AG04449 (cell line): ENCODE measurements at regions of chr15 and their contacts with region 1.

Region 1: DNA sequence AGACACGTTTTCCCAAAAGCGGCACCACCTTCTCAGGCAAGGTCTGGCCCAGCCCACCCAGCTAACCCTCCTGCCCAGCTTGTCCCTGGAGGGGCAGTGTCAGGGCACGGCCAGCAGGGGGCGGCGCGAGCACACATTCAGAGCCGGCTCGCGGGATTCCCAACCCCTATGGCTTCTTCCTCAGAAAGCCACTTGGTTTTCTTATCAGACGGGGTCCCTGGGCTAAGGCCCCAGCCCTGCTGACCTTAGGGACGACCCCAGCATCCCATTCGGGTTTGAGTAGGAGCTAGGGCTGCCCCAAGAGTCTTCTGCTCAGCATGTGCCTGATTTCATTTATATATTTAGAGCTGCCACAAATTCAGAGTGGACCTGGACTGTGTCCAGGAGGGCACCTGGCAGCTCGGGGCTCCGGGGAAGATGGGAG is 14.5 kb downstream of the RLBP1 start:
- DNase-seq: no peak
- H3K4me3 ChIP-seq: peak overlapping the region; percentile 12; the same call in 1 of the 2 replicates
- CTCF ChIP-seq: peak; percentile 99

Region 2: DNA sequence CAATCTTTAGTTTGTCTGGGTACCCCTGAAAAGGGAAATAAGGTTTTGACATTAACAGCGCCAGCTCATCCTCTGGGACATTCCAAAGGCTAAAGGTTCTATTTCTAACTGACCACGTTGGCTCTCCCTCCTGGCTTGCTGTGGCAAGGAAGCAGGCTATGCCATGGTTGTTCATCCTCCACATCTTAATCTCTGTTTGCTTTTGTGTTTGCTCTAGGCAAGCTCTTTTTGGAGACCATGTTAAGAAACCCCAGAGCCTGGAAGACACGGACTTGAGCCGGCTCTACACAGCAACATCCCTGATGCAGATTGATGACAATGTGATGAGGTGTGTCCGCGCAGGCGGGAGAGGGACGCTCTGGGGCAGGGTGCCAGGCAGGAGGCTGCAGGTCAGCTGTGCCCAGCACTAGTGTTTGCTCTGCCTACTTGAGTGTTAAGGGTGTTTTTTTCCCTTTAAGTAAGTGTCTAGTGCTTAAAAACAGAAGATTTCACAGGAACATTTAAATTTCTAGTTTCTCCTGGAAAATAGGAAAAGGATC is 18.9 kb before region 1 on chr15:
- CTCF ChIA-PET with region 1: interaction called, 97 read pairs
- POLR2A ChIA-PET with region 1: no interaction called
- DNase-seq: no peak
- H3K4me3 ChIP-seq: no peak overlapping the region
- CTCF ChIP-seq: no peak

Region 3: GRCh38 chr15:89230277-89230676 is 23.4 kb after region 1 on chr15:
- CTCF ChIA-PET with region 1: interaction called, 32 read pairs
- POLR2A ChIA-PET with region 1: no interaction called
- DNase-seq: no peak
- H3K4me3 ChIP-seq: no peak overlapping the region
- CTCF ChIP-seq: peak; percentile 29

Region 4: DNA sequence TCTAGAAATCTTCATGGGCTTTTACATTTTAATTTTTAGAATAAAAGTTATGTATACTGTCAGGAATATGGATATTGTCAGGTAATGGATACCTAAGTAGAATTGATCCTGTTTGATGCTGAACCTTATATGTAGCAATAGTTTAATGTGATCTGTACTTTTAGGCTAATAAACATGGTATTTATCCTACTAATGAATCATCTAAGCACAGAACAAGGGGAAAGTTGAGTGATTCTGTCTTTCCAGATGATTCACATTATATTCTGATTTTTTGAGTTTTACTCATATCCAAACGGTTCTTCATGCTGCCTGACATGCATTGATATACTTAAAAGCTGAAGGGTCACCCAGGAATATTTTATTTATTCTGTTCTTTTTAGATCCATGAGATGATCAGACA is 71.4 kb after region 1 on chr15:
- CTCF ChIA-PET with region 1: interaction called, 21 read pairs
- POLR2A ChIA-PET with region 1: no interaction called
- DNase-seq: no peak
- H3K4me3 ChIP-seq: no peak overlapping the region
- CTCF ChIP-seq: no peak

Region 5: DNA sequence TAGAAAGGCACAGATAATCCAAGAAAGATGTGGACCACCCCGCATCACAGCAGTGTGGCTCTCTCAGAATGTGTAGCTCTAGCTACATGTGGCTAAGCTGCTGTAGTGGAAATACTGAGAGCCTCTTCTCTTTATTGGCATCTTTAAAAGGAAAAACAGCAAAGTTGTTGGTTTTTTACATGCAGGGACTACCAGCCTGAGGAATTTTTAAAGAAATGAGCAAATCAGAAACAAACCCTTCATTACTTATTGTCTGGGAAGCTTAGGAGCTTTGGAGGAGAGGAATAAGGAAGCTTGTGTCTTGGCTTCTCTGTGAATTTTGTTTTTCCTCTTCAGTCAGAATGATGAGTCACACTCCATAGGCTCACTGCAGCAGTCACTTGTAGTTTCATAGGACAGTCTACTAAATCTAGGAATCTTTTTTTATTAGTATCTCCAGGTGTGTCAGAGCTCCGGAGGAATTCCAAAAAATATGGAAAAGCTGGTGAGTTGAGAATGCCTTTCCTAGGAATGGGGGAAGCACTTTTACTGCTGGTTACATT is 100.2 kb after region 1 on chr15:
- CTCF ChIA-PET with region 1: interaction called, 123 read pairs
- POLR2A ChIA-PET with region 1: no interaction called
- DNase-seq: peak; percentile 9
- H3K4me3 ChIP-seq: no peak overlapping the region
- CTCF ChIP-seq: no peak

Region 6: GRCh38 chr15:89364741-89365450 is 158.0 kb after region 1 on chr15:
- CTCF ChIA-PET with region 1: no interaction called
- POLR2A ChIA-PET with region 1: no interaction called
- DNase-seq: no peak
- H3K4me3 ChIP-seq: no peak overlapping the region
- CTCF ChIP-seq: no peak